Natural killer cell (primary cell): ENCODE measurements at regions of chr2 and their contacts with region 1.

Region 1: DNA sequence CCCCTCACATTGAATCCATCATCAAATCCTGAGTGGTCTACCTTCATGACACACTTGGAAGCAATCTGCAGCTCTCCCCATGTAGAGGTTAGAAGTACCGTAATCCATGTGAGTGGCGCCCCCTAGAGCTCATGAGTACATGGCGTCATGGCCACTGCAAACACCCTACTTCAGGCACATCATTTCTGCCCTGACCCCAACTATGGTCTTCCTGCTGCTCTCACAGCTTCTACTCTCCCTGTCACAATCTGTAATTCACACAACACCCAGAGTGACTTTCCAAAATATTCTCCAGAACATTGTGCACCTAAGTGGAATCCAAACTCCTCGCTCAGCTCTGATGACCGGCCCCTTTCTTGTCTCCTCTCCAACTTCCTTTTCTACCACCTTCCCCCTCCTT is 141.9 kb downstream of the ANKRD44 start:
- DNase-seq: peak; percentile 63 to 83
- ATAC-seq: peak; percentile 85 to 93 (median 89)
- H3K4me3 ChIP-seq: no peak overlapping the region
- H3K4me3 Mint-ChIP-seq: no peak overlapping the region
- H3K27ac ChIP-seq: no peak overlapping the region
- H3K27ac Mint-ChIP-seq: peak overlapping the region; percentile 72 to 75
- H3K4me1 ChIP-seq: peaks cover 41% of the 10 kb centered on the region
- H3K4me1 Mint-ChIP-seq: peaks cover 69 to 73% of the 10 kb centered on the region in 2 donors
- H3K27me3 ChIP-seq: no peaks in the 10 kb centered on the region
- H3K27me3 Mint-ChIP-seq: no peaks in the 10 kb centered on the region
- CTCF ChIP-seq: peak; percentile 70

Region 2: GRCh38 chr2:196983934-196984333 is 184.8 kb before region 1 on chr2:
- intact Hi-C with region 1: no loop called
- DNase-seq: no peak
- ATAC-seq: no peak
- H3K4me3 ChIP-seq: no peak overlapping the region
- H3K4me3 Mint-ChIP-seq: no peak overlapping the region
- H3K27ac ChIP-seq: no peak overlapping the region
- H3K27ac Mint-ChIP-seq: peak overlapping the region in 1 of 2 donors; percentile 84
- H3K4me1 ChIP-seq: no peaks in the 10 kb centered on the region
- H3K4me1 Mint-ChIP-seq: peaks cover 25 to 32% of the 10 kb centered on the region in 2 donors
- H3K27me3 ChIP-seq: no peaks in the 10 kb centered on the region
- H3K27me3 Mint-ChIP-seq: no peaks in the 10 kb centered on the region
- CTCF ChIP-seq: no peak

Region 3: DNA sequence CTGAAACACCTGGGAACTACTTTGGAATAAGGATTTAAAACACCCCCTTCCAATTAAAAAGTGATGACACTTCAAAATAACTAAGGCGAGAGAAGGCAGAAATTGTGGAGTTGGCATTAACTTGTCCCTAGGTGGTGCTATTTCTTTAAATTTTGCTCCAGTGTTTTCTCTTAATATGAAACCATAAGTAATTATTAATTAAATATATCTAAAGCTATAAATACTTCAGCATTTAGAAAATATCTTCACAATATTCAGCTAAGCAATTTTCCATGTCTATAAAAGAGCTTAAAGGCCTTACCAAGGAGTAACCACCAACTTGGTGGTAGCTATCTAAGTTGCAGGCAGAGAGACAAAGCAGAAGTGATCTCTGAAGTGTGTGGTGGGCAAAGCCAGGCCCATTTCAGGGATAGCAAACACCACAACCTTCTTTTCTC is 55.4 kb before region 1 on chr2:
- intact Hi-C with region 1: loop called (anchors 1 kb)
- DNase-seq: peak in 1 of 2 donors; percentile 71
- ATAC-seq: peak in 2 of 3 donors; percentile 48 to 63
- H3K4me3 ChIP-seq: no peak overlapping the region
- H3K4me3 Mint-ChIP-seq: no peak overlapping the region
- H3K27ac ChIP-seq: no peak overlapping the region
- H3K27ac Mint-ChIP-seq: peak overlapping the region; percentile 43 to 72
- H3K4me1 ChIP-seq: no peaks in the 10 kb centered on the region
- H3K4me1 Mint-ChIP-seq: peaks cover 23 to 27% of the 10 kb centered on the region in 2 donors
- H3K27me3 ChIP-seq: no peaks in the 10 kb centered on the region
- H3K27me3 Mint-ChIP-seq: no peaks in the 10 kb centered on the region
- CTCF ChIP-seq: peak; percentile 80

Region 4: DNA sequence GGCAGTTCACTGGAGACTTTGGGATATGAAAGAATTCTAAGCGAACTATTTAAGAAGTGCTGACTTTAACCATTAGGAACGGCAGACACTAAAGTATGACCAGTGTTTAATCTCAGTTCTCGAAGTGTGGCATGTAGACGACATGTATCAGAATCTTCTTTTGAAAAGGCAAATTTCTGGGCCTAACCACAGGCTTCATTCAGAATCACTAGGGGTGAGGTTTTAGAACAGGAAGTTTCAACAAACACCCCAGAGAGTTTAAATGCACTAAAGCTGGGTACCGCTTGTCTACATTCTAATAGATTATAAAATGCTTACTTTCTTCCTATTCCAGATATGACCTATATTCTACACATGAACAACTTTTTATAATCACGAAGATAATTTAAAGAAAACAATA is 38.4 kb before region 1 on chr2:
- intact Hi-C with region 1: loop called (anchors 5 kb)
- DNase-seq: peak in 1 of 2 donors; percentile 63
- ATAC-seq: peak; percentile 82 to 92 (median 86)
- H3K4me3 ChIP-seq: no peak overlapping the region
- H3K4me3 Mint-ChIP-seq: peak overlapping the region; percentile 80
- H3K27ac ChIP-seq: peak overlapping the region; percentile 45
- H3K27ac Mint-ChIP-seq: peak overlapping the region; percentile 81 to 86
- H3K4me1 ChIP-seq: peaks cover 21% of the 10 kb centered on the region
- H3K4me1 Mint-ChIP-seq: peaks cover 69 to 89% of the 10 kb centered on the region in 2 donors
- H3K27me3 ChIP-seq: no peaks in the 10 kb centered on the region
- H3K27me3 Mint-ChIP-seq: no peaks in the 10 kb centered on the region
- CTCF ChIP-seq: no peak

Region 5: DNA sequence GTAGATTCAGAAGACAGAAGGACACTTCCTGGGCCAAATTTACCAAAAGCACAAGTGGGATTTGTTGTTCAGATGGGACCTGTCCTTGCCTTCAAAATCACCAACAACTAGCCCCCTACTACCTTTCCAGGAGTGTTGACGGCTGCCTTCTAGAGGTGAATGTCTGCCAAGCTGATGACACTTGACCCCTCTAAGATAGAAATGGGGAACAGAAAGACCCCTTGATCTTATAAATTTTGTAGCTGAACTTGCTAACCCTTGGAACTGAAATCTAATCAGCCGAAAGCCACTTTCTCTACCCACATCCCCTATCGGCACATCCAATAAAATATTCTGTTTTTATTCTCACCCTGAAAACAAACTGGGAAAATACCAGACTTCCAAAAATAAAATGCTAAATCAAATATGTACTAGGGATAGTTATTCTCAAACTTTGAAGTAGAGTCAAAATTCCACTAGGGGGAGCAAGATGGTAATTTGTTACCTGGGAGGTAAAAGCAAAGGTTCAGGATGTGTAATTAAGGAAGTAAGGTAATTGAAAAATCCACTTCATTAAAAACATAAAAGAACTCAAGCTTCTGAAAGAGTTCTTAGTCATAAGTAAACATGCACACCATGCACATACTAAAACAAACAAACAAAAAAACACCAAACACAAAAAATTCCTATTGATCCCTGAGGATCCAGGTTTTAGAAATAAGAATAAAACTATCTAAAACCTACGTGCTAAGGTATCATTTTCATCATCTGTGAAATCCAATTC is 22.7 kb after region 1 on chr2:
- intact Hi-C with region 1: loop called (anchors 1 kb)
- DNase-seq: peak in 1 of 2 donors; percentile 86
- ATAC-seq: peak; percentile 56 to 71 (median 59)
- H3K4me3 ChIP-seq: no peak overlapping the region
- H3K4me3 Mint-ChIP-seq: peak overlapping the region; percentile 57
- H3K27ac ChIP-seq: peak overlapping the region; percentile 62
- H3K27ac Mint-ChIP-seq: peak overlapping the region; percentile 85 to 91
- H3K4me1 ChIP-seq: peaks cover 14% of the 10 kb centered on the region
- H3K4me1 Mint-ChIP-seq: peaks cover 79 to 83% of the 10 kb centered on the region in 2 donors
- H3K27me3 ChIP-seq: no peaks in the 10 kb centered on the region
- H3K27me3 Mint-ChIP-seq: no peaks in the 10 kb centered on the region
- CTCF ChIP-seq: peak; percentile 89

Region 6: GRCh38 chr2:197434541-197435513 is 266.1 kb after region 1 on chr2 and contains the start of gene SF3B1:
- intact Hi-C with region 1: no loop called
- DNase-seq: peak; percentile 99 to 100
- ATAC-seq: peak; percentile 94 to 99 (median 97)
- H3K4me3 ChIP-seq: peak within 1 kb of the TSS; percentile 92
- H3K4me3 Mint-ChIP-seq: peak within 1 kb of the TSS; percentile 98
- H3K27ac ChIP-seq: peak within 1 kb of the TSS; percentile 97
- H3K27ac Mint-ChIP-seq: peak within 1 kb of the TSS; percentile 98 to 100
- H3K4me1 ChIP-seq: peaks cover 30% of the 10 kb centered on the region
- H3K4me1 Mint-ChIP-seq: peaks cover 60 to 64% of the 10 kb centered on the region in 2 donors
- H3K27me3 ChIP-seq: no peaks in the 10 kb centered on the region
- H3K27me3 Mint-ChIP-seq: no peaks in the 10 kb centered on the region
- CTCF ChIP-seq: no peak
- total RNA-seq, gene SF3B1: 387 to 472 (median 447) TPM